ENCODE measurements at regions of chr1 and their contacts with region 1.

Region 1: DNA sequence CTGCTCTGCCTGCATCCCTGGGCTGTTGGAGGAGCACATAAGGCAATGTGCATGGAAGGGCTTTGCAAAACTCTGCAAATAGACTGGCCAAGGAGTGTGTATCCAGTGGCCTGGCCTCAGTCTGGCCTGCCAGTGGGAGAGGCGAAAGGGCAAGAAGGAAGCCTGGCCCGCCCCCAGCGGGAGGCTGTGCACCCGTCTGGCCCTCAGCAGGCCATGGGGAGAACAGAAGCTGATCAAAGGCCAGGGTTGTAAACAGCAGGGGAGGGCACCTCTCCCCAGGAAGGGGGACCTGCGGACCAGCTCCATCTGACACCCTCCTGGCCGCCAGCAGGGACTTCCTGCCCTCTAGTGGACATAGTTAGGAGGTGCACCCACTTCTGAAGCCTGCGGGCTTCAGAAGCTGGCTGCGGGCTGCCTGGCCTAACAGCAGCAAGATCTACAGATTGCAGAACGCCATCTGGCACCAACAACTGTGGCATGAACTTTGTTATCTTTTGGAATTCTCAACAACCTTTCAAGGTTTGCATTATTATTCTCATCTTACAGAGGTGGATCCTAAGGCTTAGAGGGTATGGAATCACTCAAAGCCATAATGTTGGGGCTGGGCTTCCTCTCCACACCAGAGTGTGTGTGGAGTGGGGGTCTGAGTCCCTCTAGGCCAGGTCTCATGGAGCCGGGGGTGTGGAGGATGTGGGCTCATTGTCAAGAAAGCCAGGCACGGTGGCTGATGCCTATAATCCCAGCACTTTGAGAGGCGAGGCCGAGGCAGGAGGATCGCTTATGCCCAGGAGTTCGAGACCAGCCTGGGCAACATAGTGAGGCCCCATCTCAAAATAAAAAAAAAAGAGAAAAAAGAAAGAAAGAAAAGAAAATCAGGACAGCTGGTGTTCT is 18.9 kb upstream of the CDK18 start:
- DNase-seq: peak; percentile 72 to 89 (median 86)
- H3K4me3 ChIP-seq: no peak overlapping the region
- H3K27ac ChIP-seq: no peak overlapping the region
- H3K4me1 ChIP-seq: peaks cover 0 to 7% (median 0%) of the 10 kb centered on the region in 4 experiments
- H3K27me3 ChIP-seq: peaks cover 0 to 62% (median 29%) of the 10 kb centered on the region in 5 experiments

Region 2: DNA sequence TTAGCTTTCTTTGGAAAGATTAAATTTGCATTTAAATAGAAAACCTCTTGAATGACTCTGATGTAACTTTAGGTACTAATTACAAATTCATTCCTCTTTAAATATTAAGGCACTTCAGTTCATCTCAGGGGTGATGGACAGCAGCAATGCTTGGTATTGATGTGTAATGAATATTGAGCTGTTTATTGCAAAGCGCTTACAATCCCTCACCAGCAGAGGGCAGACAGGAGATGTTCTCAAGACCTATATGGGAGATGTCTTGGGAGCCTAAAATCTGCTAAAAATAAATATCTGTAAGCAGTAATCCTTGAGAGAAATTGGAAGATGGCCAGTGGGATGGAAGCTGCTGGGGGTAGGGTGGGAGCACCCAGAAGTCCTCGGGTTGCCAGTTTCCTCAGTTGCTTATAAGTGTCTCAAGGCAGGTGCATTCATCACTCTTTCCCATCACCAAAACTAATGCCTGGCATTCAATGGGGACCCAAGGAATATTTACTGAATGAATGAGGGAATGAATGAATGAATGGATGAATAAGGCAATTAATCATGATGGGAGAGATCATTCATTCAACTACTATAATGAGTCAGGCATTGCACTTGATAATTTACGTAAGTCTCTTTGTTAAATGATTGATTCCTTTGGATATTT is 131.2 kb before region 1 on chr1:
- CTCF ChIA-PET with region 1: interaction called, 12 read pairs
- POLR2A ChIA-PET with region 1: no interaction called
- DNase-seq: peak; percentile 68 to 85 (median 78)
- H3K4me3 ChIP-seq: no peak overlapping the region
- H3K27ac ChIP-seq: no peak overlapping the region
- H3K4me1 ChIP-seq: no peaks in the 10 kb centered on the region
- H3K27me3 ChIP-seq: peaks cover 0 to 13% (median 2%) of the 10 kb centered on the region in 5 experiments

Region 3: GRCh38 chr1:205396967-205397616 is 88.5 kb before region 1 on chr1:
- CTCF ChIA-PET with region 1: interaction called, 88 read pairs
- POLR2A ChIA-PET with region 1: no interaction called
- DNase-seq: peak; percentile 52 to 69 (median 69)
- H3K4me3 ChIP-seq: no peak overlapping the region
- H3K27ac ChIP-seq: no peak overlapping the region
- H3K4me1 ChIP-seq: no peaks in the 10 kb centered on the region
- H3K27me3 ChIP-seq: peaks cover 1 to 10% (median 4%) of the 10 kb centered on the region in 5 experiments

Region 4: GRCh38 chr1:205430696-205431305 is 54.8 kb before region 1 on chr1:
- CTCF ChIA-PET with region 1: interaction called, 34 read pairs
- POLR2A ChIA-PET with region 1: no interaction called
- DNase-seq: peak; percentile 61 to 70 (median 68)
- H3K4me3 ChIP-seq: peak overlapping the region; percentile 28 to 71 (median 63)
- H3K27ac ChIP-seq: no peak overlapping the region
- H3K4me1 ChIP-seq: peaks cover 5 to 10% (median 9%) of the 10 kb centered on the region in 4 experiments
- H3K27me3 ChIP-seq: peaks cover 0 to 16% (median 1%) of the 10 kb centered on the region in 5 experiments

Region 5: DNA sequence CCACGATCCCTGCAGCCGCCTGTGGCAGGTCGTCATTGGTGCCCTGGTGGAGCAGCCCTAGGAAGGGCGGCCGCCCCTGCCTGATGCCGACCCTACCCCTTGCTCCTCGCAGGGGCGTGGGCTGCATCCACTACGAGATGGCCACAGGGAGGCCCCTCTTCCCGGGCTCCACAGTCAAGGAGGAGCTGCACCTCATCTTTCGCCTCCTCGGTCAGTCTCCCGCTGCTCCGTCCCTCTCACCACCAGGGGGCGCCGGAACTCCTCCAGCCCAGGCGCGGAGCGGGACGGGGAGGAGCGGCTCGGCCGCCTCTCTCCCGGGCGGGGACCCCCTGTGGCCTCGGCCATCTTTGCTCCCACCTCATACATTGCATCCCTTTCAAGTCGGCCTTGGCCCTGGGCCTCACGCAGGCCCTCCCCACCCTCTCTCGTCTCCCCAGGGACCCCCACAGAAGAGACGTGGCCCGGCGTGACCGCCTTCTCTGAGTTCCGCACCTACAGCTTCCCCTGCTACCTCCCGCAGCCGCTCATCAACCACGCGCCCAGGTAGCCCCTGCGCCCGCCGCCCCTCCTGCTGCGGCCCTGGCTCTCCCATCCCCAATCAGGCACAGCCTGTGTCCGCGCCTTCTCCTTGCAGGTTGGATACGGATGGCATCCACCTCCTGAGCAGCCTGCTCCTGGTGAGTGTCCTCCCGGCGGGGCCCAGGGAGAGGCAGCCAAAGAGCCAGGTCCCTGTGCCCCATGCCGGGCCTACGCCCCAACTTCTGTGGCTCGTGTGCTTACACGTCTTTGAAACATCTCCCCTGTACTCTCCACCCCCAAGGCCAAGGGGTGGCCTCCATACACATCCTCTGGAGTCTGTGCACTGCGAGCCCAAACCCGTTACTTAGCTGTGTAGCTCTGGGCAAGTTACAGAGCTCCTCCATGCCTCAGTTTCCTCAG is 43.6 kb after region 1 on chr1:
- CTCF ChIA-PET with region 1: interaction called, 463 read pairs
- POLR2A ChIA-PET with region 1: no interaction called
- DNase-seq: peak; percentile 71 to 76 (median 74)
- H3K4me3 ChIP-seq: peak overlapping the region in 4 of 7 experiments; percentile 32 to 70 (median 44)
- H3K27ac ChIP-seq: no peak overlapping the region
- H3K4me1 ChIP-seq: peaks cover 0 to 5% (median 1%) of the 10 kb centered on the region in 4 experiments
- H3K27me3 ChIP-seq: no peaks in the 10 kb centered on the region

Region 6: DNA sequence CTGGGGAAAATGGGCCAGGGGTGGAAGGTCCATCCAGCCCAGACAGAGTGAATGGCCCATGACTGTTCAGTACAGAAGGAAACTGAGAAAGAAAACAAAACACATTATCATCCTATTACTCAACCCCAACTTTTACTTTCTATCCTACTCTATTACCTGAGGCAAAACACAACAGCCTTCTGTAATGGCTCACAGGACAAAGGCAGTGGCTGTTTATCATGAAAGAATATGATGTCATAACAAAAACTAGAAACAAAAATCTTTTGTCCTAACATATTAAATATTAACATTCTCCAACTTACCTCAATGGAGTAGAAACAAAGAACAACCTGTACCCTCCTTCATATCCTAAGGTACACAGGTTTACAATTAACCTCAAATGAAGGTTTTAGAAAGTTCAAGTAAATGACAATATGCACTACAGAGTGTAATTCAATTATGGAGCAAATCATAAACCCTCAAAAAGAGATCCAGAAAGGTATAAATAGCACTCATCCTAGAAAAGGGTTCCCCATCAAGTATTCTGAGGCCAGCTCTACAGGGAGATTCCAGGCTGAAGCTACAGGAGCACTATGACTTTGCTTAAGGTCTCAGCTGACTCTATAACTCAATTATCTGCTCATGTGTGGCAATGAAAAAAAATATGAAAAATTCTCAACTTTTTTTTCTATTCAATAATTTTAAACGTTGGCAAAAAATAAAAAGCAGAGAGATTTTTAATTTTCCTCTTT is 131.1 kb after region 1 on chr1:
- CTCF ChIA-PET with region 1: no interaction called
- POLR2A ChIA-PET with region 1: no interaction called
- DNase-seq: no peak
- H3K4me3 ChIP-seq: no peak overlapping the region
- H3K27ac ChIP-seq: no peak overlapping the region
- H3K4me1 ChIP-seq: no peaks in the 10 kb centered on the region
- H3K27me3 ChIP-seq: no peaks in the 10 kb centered on the region

Region 7: DNA sequence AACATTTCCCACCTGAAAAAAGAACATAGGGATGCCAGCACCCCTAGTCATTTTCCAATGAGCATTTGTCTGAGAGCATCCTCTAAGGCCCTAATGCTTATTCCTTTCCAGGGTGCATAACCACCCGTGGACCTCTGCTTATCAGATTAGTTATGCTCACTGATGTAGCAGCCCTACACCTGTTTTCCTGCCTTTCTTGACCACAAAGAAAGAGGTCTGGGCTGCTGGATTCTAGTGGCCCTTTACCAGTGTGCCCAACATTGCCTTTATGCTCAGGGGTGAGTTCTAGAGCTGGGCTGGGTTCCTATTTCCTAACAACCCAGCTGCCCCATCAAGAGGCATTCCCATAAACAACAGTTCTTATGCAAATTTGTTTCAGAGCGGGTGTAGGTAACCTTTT is 384.7 kb after region 1 on chr1:
- CTCF ChIA-PET with region 1: no interaction called
- POLR2A ChIA-PET with region 1: no interaction called
- DNase-seq: no peak
- H3K4me3 ChIP-seq: no peak overlapping the region
- H3K27ac ChIP-seq: no peak overlapping the region
- H3K4me1 ChIP-seq: no peaks in the 10 kb centered on the region
- H3K27me3 ChIP-seq: peaks cover 0 to 12% (median 3%) of the 10 kb centered on the region in 5 experiments

Measured in common myeloid progenitor, CD34-positive (primary cell).